CD8-positive, alpha-beta T cell (primary cell): ENCODE measurements at regions of chr17 and their contacts with region 1.

Region 1: DNA sequence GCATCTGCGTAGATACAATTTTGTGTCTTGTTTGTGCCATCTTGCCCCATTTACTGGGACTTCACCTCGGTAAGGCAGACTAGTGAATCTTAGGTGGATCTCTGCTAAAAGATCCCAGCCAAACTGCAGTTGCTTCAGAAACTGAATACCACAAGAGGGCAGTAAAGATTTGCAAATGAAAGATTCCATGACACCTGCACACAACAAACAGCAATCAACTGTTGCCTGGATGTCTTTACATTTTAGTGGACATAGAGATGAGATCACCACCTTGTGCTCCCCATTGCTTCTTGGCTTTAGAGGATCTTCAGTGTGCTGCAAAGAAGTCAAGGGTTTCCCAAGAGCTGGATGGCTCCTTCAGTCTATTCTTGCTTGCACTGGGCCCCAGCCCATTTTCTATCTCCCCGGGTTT is 119.2 kb upstream of the CACNG5 start:
- DNase-seq: peak in 3 of 9 experiments; percentile 45 to 65 (median 54)
- ATAC-seq: peak; percentile 41
- H3K4me3 ChIP-seq: no peak overlapping the region
- H3K4me3 Mint-ChIP-seq: no peak overlapping the region
- H3K27ac ChIP-seq: no peak overlapping the region
- H3K27ac Mint-ChIP-seq: no peak overlapping the region
- H3K4me1 ChIP-seq: peaks cover 8% of the 10 kb centered on the region
- H3K4me1 Mint-ChIP-seq: peaks cover 37% of the 10 kb centered on the region
- H3K27me3 ChIP-seq: no peaks in the 10 kb centered on the region
- H3K27me3 Mint-ChIP-seq: no peaks in the 10 kb centered on the region
- CTCF ChIP-seq: peak; percentile 50

Region 2: DNA sequence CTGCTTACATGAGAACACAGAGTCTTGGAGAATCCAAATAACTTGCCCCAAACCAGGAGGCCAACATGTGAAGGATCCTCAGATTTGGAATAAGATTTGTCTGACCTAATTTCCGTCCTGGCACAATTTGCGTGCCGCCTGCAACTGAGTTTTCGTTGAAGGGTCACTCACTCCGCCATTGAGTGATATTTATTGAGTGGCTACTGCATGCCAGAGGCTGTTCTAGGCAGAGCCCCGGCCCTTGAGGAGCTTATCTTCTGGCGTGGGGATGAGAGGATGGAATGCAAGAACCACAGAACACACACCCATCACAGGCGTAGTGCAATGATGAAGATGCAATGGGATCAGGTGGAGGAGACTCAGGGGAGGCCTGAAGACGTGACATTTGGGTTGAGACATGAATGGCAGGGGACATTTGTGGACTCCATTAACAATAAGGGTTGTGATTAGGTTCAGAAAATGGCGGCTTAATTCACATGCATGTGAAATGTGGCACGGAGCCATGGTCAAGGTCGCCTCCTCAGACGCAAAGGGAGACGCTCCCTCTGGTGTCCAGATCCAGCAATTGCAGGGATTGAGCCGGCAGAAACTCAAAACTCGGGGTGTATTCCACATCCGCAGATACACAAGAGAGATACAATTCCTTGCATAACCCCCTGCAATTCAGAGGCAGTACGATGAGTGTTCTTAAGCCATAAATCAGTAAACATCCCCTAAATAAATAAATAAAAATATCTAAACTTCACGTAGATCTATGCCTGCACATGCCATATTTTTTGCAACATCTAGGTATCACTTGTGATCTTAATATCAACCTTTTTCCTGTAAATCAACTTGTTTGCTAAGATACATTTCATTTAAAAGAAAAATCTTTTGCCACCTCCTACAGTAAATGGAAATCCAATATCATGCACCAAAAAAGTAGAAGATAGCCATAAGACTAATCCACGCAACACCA is 190.8 kb after region 1 on chr17:
- CTCF ChIA-PET with region 1: interaction called, 4 read pairs
- POLR2A ChIA-PET with region 1: no interaction called
- intact Hi-C with region 1: loop called (anchors 1 to 2 kb)
- DNase-seq: peak; percentile 27 to 79 (median 58)
- ATAC-seq: peak; percentile 48
- H3K4me3 ChIP-seq: no peak overlapping the region
- H3K4me3 Mint-ChIP-seq: no peak overlapping the region
- H3K27ac ChIP-seq: no peak overlapping the region
- H3K27ac Mint-ChIP-seq: no peak overlapping the region
- H3K4me1 ChIP-seq: no peaks in the 10 kb centered on the region
- H3K4me1 Mint-ChIP-seq: peaks cover 5% of the 10 kb centered on the region
- H3K27me3 ChIP-seq: no peaks in the 10 kb centered on the region
- H3K27me3 Mint-ChIP-seq: peaks cover 4% of the 10 kb centered on the region
- CTCF ChIP-seq: peak; percentile 67

Region 3: GRCh38 chr17:67082107-67082506 is 366.4 kb after region 1 on chr17:
- CTCF ChIA-PET with region 1: no interaction called
- POLR2A ChIA-PET with region 1: no interaction called
- intact Hi-C with region 1: loop called (anchors 2 to 10 kb)
- DNase-seq: peak in 2 of 9 experiments; percentile 33 to 61
- ATAC-seq: peak; percentile 86
- H3K4me3 ChIP-seq: no peak overlapping the region
- H3K4me3 Mint-ChIP-seq: peak overlapping the region; percentile 21
- H3K27ac ChIP-seq: peak overlapping the region in 1 of 2 experiments; percentile 49
- H3K27ac Mint-ChIP-seq: peak overlapping the region; percentile 74
- H3K4me1 ChIP-seq: peaks cover 16% of the 10 kb centered on the region
- H3K4me1 Mint-ChIP-seq: peaks cover 23% of the 10 kb centered on the region
- H3K27me3 ChIP-seq: no peaks in the 10 kb centered on the region
- H3K27me3 Mint-ChIP-seq: no peaks in the 10 kb centered on the region
- CTCF ChIP-seq: peak; percentile 53

Region 4: DNA sequence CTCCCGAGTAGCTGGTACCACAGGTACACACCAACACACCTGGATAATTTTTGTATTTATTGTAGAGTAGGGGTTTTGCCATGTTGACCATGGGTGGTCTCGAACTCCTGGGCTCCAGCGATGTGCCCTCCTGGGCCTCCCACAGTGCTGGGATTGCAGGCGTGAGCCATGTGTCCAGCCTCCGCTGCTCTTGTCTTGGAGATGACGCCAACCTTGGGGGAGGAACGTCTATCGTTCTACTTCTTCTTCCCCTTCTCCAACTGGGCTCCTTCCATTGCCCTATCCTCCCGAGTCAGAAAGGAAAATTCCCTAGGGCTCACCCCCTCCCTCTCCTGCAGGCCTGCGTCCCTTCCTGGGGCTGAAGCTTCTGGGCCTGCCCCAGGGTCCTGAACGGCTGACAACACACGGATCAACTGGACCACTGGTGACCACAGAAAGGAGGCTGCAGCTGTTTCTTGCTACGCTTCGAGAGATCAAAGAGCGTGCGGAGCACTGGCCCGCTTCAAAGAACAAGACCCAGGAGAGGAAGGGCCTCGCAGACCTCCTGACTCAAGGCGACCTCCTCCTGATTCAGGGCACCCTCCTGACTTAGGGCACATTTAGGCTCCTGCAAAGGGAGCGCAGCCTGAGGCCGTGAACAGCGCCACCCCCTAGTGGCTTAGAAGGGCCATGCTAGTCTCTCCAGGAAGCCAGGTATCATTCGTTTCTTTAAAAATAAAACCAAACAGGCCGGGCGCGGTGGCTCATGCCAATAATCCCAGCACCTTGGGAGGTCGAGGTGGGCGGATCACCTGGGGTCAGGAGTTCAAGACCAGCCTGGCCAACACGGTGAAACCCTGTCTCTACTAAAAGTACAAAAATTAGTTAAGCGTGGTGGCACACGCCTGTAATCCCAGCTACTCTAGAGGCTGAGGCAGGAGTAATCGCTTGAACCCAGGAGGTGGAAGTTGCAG is 577.8 kb after region 1 on chr17:
- CTCF ChIA-PET with region 1: no interaction called
- POLR2A ChIA-PET with region 1: no interaction called
- intact Hi-C with region 1: loop called in 1 of 2 experiments (anchors 5 kb)
- DNase-seq: peak; percentile 37 to 83 (median 69)
- ATAC-seq: peak; percentile 97
- H3K4me3 ChIP-seq: peak overlapping the region in 1 of 2 experiments; percentile 12
- H3K4me3 Mint-ChIP-seq: peak overlapping the region; percentile 57
- H3K27ac ChIP-seq: no peak overlapping the region
- H3K27ac Mint-ChIP-seq: no peak overlapping the region
- H3K4me1 ChIP-seq: no peaks in the 10 kb centered on the region
- H3K4me1 Mint-ChIP-seq: peaks cover 3% of the 10 kb centered on the region
- H3K27me3 ChIP-seq: no peaks in the 10 kb centered on the region
- H3K27me3 Mint-ChIP-seq: no peaks in the 10 kb centered on the region
- CTCF ChIP-seq: peak; percentile 74

Region 5: DNA sequence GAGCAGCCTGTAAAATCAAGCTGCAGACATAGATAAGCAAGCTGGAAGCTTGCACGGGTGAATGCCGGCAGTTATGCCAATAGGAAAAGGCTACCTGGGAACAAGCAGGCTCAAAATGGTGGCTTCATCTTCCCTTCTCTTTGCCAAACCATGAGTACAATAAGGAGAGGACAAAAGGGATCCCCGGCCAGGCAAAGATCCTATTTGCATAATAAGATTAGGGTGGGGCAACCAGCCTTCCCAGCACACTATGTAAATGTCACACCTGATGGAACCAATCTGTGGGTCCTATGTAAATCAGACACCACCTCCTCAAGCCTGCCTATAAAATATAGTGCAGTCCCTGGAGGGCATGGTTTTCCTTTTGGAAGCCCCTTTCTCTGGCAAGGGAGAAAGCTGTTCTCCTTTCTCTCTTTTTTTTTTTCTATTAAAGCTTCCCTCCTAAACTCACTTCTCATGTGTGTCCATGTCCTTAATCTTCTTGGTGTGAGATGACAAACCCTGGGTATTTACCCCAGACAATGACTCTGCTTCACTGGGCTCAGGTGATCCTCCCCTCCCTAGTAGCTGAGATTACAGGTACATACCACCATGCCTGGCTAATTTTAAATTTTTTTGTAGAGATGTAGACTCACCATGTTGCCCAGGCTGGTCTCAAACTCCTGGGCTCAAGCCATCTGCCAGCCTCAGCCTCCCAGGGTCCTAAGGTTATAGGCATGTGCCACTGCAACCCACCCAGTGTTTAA is 606.5 kb after region 1 on chr17:
- CTCF ChIA-PET with region 1: no interaction called
- POLR2A ChIA-PET with region 1: no interaction called
- intact Hi-C with region 1: no loop called
- DNase-seq: no peak
- ATAC-seq: no peak
- H3K4me3 ChIP-seq: no peak overlapping the region
- H3K4me3 Mint-ChIP-seq: no peak overlapping the region
- H3K27ac ChIP-seq: no peak overlapping the region
- H3K27ac Mint-ChIP-seq: no peak overlapping the region
- H3K4me1 ChIP-seq: no peaks in the 10 kb centered on the region
- H3K4me1 Mint-ChIP-seq: no peaks in the 10 kb centered on the region
- H3K27me3 ChIP-seq: no peaks in the 10 kb centered on the region
- H3K27me3 Mint-ChIP-seq: peaks cover 3% of the 10 kb centered on the region
- CTCF ChIP-seq: no peak

Region 6: GRCh38 chr17:67689534-67690177 is 973.9 kb after region 1 on chr17:
- CTCF ChIA-PET with region 1: no interaction called
- POLR2A ChIA-PET with region 1: no interaction called
- intact Hi-C with region 1: loop called in 1 of 2 experiments (anchors 5 kb)
- DNase-seq: peak in 7 of 9 experiments; percentile 18 to 77 (median 39)
- ATAC-seq: peak; percentile 73
- H3K4me3 ChIP-seq: no peak overlapping the region
- H3K4me3 Mint-ChIP-seq: no peak overlapping the region
- H3K27ac ChIP-seq: no peak overlapping the region
- H3K27ac Mint-ChIP-seq: no peak overlapping the region
- H3K4me1 ChIP-seq: no peaks in the 10 kb centered on the region
- H3K4me1 Mint-ChIP-seq: peaks cover 4% of the 10 kb centered on the region
- H3K27me3 ChIP-seq: no peaks in the 10 kb centered on the region
- H3K27me3 Mint-ChIP-seq: no peaks in the 10 kb centered on the region
- CTCF ChIP-seq: peak; percentile 93